ENCODE measurements at regions of chr17 and their contacts with region 1.

Region 1: GRCh38 chr17:64975329-64976087 is 56.2 kb upstream of the LRRC37A3 start:
- H3K4me3 Mint-ChIP-seq: peak overlapping the region; percentile 89
- H3K27ac Mint-ChIP-seq: peak overlapping the region; percentile 95
- H3K4me1 Mint-ChIP-seq: peaks cover 37% of the 10 kb centered on the region
- H3K27me3 Mint-ChIP-seq: no peaks in the 10 kb centered on the region

Region 2: GRCh38 chr17:65013613-65014391 is 38.3 kb after region 1 on chr17:
- intact Hi-C with region 1: loop called (anchors 5 kb)
- H3K4me3 Mint-ChIP-seq: no peak overlapping the region
- H3K27ac Mint-ChIP-seq: no peak overlapping the region
- H3K4me1 Mint-ChIP-seq: peaks cover 55% of the 10 kb centered on the region
- H3K27me3 Mint-ChIP-seq: no peaks in the 10 kb centered on the region

Region 3: DNA sequence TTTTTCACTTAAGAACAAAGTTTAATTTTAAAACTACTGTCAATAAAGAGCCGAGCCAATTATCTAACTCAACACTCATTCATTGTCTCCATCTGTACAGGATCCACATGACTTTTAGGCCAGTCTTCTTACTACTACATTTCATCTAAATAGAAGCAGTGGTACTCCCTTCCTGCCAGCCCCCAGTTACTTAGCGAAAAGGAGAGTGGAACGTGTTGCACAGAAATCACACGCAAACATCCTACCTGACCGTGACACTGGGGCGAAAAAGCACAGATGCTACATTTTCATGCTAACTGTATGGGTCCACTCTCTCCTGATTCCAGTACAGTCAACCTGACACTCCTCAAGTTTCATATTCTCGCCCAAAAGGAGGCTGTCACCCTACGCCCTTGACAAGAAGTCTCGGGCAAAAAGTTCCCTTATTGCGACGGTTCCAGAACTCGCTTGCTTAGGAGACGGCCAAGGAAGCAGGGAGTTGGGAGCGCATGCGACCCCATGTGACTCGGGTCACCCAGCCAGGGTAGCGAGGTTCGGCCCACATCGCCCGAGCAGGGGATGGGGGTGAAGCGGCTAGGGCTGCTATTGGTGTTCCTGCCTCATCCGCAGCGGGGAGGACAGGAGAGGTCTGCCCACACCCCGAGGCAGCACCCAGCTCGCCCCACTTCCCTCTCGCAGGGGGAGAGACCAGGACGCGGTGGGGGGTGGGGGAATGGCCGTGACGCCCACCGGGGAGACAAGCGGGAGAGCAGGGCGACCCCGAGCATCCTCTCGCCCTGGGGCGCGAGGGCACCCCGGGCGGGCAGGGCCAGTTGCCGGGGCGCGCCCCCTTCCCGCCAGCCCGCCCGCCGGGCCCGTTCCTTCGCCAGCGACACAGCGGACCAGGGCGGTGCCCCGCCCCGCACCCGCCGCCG is 80.1 kb after region 1 on chr17:
- intact Hi-C with region 1: loop called (anchors 2 kb)
- H3K4me3 Mint-ChIP-seq: peak overlapping the region; percentile 90
- H3K27ac Mint-ChIP-seq: peak overlapping the region; percentile 99
- H3K4me1 Mint-ChIP-seq: peaks cover 71% of the 10 kb centered on the region
- H3K27me3 Mint-ChIP-seq: no peaks in the 10 kb centered on the region

Region 4: GRCh38 chr17:65137021-65137991 is 161.8 kb after region 1 on chr17 and contains the start of gene RGS9:
- intact Hi-C with region 1: loop called (anchors 10 kb)
- H3K4me3 Mint-ChIP-seq: peak within 1 kb of the TSS; percentile 61
- H3K27ac Mint-ChIP-seq: peak within 1 kb of the TSS; percentile 49
- H3K4me1 Mint-ChIP-seq: peaks cover 26% of the 10 kb centered on the region
- H3K27me3 Mint-ChIP-seq: peaks cover 62% of the 10 kb centered on the region

Measured in dendritic cell treated with granulocyte-macrophage colony-stimulating factor and Interleukin-4, amounts not matched to agents 40 ng/mL and 50 ng/mL, for 4 days (primary cell).